Activated B cell treated with CpG ODN at 0.5 μM for 24 hours (primary cell): ENCODE measurements at regions of chr19 and their contacts with region 1.

Region 1: DNA sequence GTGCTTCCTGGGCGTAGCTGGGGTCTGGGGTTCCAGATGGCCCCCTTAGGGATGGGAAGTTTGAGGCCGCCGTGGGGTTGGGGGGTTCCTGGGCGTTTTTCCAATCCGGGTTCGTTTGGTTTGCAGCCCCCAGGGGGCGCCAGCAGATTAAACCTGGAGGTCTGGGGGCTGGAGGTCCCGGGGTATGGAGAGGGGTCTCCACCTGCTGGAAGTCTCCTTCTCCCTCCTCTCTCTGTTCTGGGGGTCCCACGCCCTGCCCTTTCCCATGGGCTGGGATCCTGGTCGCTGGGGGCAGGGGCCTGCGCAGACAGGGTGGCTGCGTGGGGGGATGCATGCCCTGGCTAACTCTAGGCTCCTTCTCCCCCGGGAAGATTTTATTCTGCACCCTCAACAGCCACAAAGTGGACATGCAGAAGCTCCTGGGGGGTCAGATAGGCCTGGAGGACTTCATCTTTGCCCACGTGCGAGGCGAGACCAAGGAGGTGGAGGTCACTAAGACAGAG is 897 bp downstream of the GIPC3 start:
- DNase-seq: peak; percentile 46
- ATAC-seq: peak; percentile 45
- H3K4me3 Mint-ChIP-seq: peak overlapping the region; percentile 48
- H3K27ac Mint-ChIP-seq: no peak overlapping the region
- H3K4me1 Mint-ChIP-seq: no peaks in the 10 kb centered on the region
- H3K27me3 Mint-ChIP-seq: peaks cover 2% of the 10 kb centered on the region
- CTCF ChIP-seq: peak; percentile 45

Region 2: DNA sequence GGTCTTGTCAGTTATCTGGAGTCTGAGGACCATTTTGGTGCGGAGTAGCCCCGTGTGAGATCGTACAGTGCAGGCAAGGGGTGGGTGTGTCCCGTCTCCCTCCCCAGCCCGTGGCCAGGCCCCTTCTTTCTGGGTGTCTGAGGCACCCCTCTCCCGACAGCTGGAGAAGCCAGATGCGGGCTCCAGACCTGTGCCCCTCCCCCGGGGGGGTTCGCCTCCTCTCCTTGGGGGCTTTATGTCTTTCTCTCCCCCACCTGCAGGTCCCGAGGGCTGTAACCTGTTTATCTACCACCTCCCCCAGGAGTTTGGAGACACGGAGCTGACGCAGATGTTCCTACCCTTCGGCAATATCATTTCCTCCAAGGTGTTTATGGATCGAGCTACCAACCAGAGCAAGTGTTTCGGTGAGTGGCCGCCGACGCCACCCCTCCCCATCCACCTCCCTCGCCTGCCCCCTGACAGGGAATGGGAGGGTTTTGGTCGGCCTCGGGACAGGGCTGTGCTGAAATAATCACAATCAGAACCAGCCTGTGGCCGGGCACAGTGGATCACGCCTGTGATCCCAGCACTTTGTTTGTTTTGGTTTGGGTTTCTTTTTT is 296.1 kb before region 1 on chr19:
- CTCF ChIA-PET with region 1: no interaction called
- POLR2A ChIA-PET with region 1: no interaction called
- intact Hi-C with region 1: no loop called
- DNase-seq: no peak
- ATAC-seq: no peak
- H3K4me3 Mint-ChIP-seq: no peak overlapping the region
- H3K27ac Mint-ChIP-seq: no peak overlapping the region
- H3K4me1 Mint-ChIP-seq: peaks cover 4% of the 10 kb centered on the region
- H3K27me3 Mint-ChIP-seq: peaks cover 29% of the 10 kb centered on the region
- CTCF ChIP-seq: no peak

Region 3: GRCh38 chr19:3618144-3618810 is 32.1 kb after region 1 on chr19:
- CTCF ChIA-PET with region 1: interaction called, 3 read pairs
- POLR2A ChIA-PET with region 1: no interaction called
- intact Hi-C with region 1: loop called (anchors 1 kb)
- DNase-seq: peak; percentile 65
- ATAC-seq: peak; percentile 81
- H3K4me3 Mint-ChIP-seq: no peak overlapping the region
- H3K27ac Mint-ChIP-seq: no peak overlapping the region
- H3K4me1 Mint-ChIP-seq: peaks cover 14% of the 10 kb centered on the region
- H3K27me3 Mint-ChIP-seq: no peaks in the 10 kb centered on the region
- CTCF ChIP-seq: peak; percentile 34

Region 4: DNA sequence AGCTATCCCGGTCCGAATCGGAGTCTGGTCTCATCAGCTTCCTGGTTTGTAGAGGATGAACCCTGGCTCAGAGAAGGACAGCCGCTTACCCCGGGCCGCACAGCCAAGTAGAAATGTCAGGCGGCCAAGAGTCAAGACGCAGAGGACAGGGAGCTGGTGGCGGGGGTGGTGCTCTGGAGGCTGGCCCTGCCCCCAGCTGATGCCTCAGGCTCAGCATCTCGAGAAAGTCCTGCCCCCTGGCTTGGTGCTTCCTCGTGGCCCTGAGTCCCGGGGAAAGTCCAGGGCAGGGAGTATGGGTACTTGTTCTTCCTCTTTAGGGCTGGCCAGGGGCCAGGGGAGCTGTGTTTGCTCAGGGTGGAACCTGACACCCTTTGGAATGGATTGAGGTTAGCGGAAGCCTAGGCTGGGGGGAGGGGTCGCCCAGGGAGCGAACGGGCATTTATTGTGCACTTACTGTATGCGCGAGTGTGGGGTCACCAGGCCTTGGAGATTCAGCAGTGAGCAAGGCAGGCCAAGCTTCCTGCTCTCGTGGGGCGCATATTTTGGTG is 124.2 kb after region 1 on chr19:
- CTCF ChIA-PET with region 1: interaction called, 5 read pairs
- POLR2A ChIA-PET with region 1: no interaction called
- intact Hi-C with region 1: loop called (anchors 1 kb)
- DNase-seq: no peak
- ATAC-seq: no peak
- H3K4me3 Mint-ChIP-seq: no peak overlapping the region
- H3K27ac Mint-ChIP-seq: no peak overlapping the region
- H3K4me1 Mint-ChIP-seq: peaks cover 6% of the 10 kb centered on the region
- H3K27me3 Mint-ChIP-seq: peaks cover 8% of the 10 kb centered on the region
- CTCF ChIP-seq: no peak